GM12878 (cell line): ENCODE measurements at regions of chr10 and their contacts with region 1.

Region 1: DNA sequence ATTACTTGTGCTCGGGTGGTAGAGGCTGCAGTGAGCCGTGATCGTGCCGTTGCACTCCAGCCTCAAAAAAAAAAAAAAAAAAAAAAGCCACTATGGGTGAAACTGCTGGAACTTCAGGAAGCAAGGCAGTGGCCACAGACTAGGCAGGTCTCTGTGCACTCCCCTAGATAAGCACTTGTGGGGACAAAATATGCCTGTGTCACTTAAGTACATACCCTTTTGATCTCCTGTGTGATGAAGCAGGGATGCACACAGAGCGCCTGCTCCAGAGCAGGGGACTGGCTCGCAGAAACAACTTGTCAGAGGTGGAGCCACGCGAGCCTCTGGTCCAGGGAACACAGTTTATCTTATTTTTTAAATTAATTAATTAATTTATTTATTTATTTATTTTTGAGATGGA is 42.9 kb upstream of the PSAP start:
- DNase-seq: no peak
- ATAC-seq: no peak
- H3K4me3 ChIP-seq: no peak overlapping the region
- H3K27ac ChIP-seq: no peak overlapping the region
- H3K4me1 ChIP-seq: peaks cover 16% of the 10 kb centered on the region
- H3K27me3 ChIP-seq: no peaks in the 10 kb centered on the region
- CTCF ChIP-seq: no peak
- EP300 ChIP-seq: no peak
- POLR2A ChIP-seq: no peak
- RAD21 ChIP-seq: no peak

Region 2: GRCh38 chr10:71383972-71384687 is 509.8 kb before region 1 on chr10:
- CTCF ChIA-PET with region 1: no interaction called
- POLR2A ChIA-PET with region 1: no interaction called
- RAD21 ChIA-PET with region 1: no interaction called
- SMC1A ChIA-PET with region 1: no interaction called
- in situ Hi-C with region 1: no loop called
- intact Hi-C with region 1: loop called (anchors 10 kb)
- DNase-seq: no peak
- ATAC-seq: peak; percentile 98
- H3K4me3 ChIP-seq: no peak overlapping the region
- H3K27ac ChIP-seq: no peak overlapping the region
- H3K4me1 ChIP-seq: no peaks in the 10 kb centered on the region
- H3K27me3 ChIP-seq: peaks cover 0 to 3% of the 10 kb centered on the region in 2 experiments; a peak in 1 of 4 replicates
- CTCF ChIP-seq: peak; percentile 95 to 97 (median 95)
- EP300 ChIP-seq: no peak
- POLR2A ChIP-seq: no peak
- RAD21 ChIP-seq: peak; percentile 86

Region 3: GRCh38 chr10:71582019-71582418 is 311.9 kb before region 1 on chr10:
- CTCF ChIA-PET with region 1: no interaction called
- POLR2A ChIA-PET with region 1: no interaction called
- RAD21 ChIA-PET with region 1: no interaction called
- SMC1A ChIA-PET with region 1: no interaction called
- in situ Hi-C with region 1: no loop called
- intact Hi-C with region 1: no loop called
- DNase-seq: no peak
- ATAC-seq: 0 out of 3 replicates have a peak, but pooled peaks have one; percentile 23
- H3K4me3 ChIP-seq: no peak overlapping the region
- H3K27ac ChIP-seq: no peak overlapping the region
- H3K4me1 ChIP-seq: no peaks in the 10 kb centered on the region
- H3K27me3 ChIP-seq: no peaks in the 10 kb centered on the region; a peak in 1 of 4 replicates
- CTCF ChIP-seq: no peak
- EP300 ChIP-seq: no peak
- POLR2A ChIP-seq: no peak
- RAD21 ChIP-seq: no peak

Region 4: GRCh38 chr10:71766702-71767419 is 127.1 kb before region 1 on chr10:
- CTCF ChIA-PET with region 1: interaction called, 10 read pairs
- POLR2A ChIA-PET with region 1: no interaction called
- RAD21 ChIA-PET with region 1: interaction called, 19 read pairs
- SMC1A ChIA-PET with region 1: interaction called, 11 read pairs
- in situ Hi-C with region 1: no loop called
- intact Hi-C with region 1: no loop called
- DNase-seq: no peak
- ATAC-seq: peak; percentile 12
- H3K4me3 ChIP-seq: no peak overlapping the region
- H3K27ac ChIP-seq: no peak overlapping the region
- H3K4me1 ChIP-seq: peaks cover 32% of the 10 kb centered on the region
- H3K27me3 ChIP-seq: no peaks in the 10 kb centered on the region
- CTCF ChIP-seq: no peak
- EP300 ChIP-seq: no peak
- POLR2A ChIP-seq: no peak
- RAD21 ChIP-seq: no peak

Region 5: GRCh38 chr10:71835671-71836595 is 58.0 kb before region 1 on chr10:
- CTCF ChIA-PET with region 1: interaction called, 104 read pairs
- POLR2A ChIA-PET with region 1: interaction called, 4 read pairs
- RAD21 ChIA-PET with region 1: interaction called, 39 read pairs
- SMC1A ChIA-PET with region 1: interaction called, 27 read pairs
- in situ Hi-C with region 1: no loop called
- intact Hi-C with region 1: loop called (anchors 1 kb)
- DNase-seq: peak; percentile 97
- ATAC-seq: peak; percentile 97
- H3K4me3 ChIP-seq: peak overlapping the region; percentile 44
- H3K27ac ChIP-seq: peak overlapping the region; percentile 89
- H3K4me1 ChIP-seq: peaks cover 61% of the 10 kb centered on the region
- H3K27me3 ChIP-seq: no peaks in the 10 kb centered on the region
- CTCF ChIP-seq: no peak
- EP300 ChIP-seq: peak; percentile 87 to 93
- POLR2A ChIP-seq: no peak
- RAD21 ChIP-seq: no peak

Region 6: DNA sequence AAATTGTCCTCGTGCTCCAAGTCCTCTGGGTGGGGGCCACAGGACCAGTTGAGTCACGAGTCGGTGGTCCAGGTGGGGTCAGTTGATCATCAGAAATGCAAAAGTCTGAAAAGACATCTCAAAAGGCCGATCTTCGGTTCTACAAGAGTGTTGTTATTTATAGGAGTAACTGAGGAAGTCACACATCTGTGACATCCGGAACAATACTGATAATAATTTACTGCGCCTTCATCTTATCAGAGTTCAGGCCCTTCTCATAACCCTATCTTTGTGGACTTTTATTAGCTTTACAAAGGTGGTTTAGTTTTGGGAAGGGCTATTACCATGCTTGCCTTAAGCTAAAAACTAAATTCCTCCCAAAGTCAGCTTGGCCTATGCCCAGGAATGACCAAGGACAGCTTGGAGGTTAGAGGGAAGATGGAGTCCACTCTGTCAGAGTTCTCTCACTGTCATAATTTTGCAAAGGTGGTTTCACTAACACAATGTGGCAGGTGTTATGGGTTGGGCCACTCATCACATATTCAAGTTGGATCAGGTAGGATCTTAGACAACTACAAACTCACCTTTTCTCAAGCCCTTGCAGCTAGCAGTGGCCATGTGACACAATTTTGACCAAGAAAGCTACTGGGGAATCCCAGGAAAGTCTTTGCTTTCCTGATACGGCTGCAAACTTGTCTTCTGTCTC is 15.6 kb after region 1 on chr10:
- CTCF ChIA-PET with region 1: interaction called, 16 read pairs
- POLR2A ChIA-PET with region 1: no interaction called
- RAD21 ChIA-PET with region 1: no interaction called
- SMC1A ChIA-PET with region 1: interaction called, 5 read pairs
- in situ Hi-C with region 1: no loop called
- intact Hi-C with region 1: no loop called
- DNase-seq: no peak
- ATAC-seq: peak; percentile 66
- H3K4me3 ChIP-seq: no peak overlapping the region
- H3K27ac ChIP-seq: peak overlapping the region; percentile 52
- H3K4me1 ChIP-seq: peaks cover 13% of the 10 kb centered on the region
- H3K27me3 ChIP-seq: no peaks in the 10 kb centered on the region
- CTCF ChIP-seq: no peak
- EP300 ChIP-seq: no peak
- POLR2A ChIP-seq: no peak
- RAD21 ChIP-seq: no peak

Region 7: DNA sequence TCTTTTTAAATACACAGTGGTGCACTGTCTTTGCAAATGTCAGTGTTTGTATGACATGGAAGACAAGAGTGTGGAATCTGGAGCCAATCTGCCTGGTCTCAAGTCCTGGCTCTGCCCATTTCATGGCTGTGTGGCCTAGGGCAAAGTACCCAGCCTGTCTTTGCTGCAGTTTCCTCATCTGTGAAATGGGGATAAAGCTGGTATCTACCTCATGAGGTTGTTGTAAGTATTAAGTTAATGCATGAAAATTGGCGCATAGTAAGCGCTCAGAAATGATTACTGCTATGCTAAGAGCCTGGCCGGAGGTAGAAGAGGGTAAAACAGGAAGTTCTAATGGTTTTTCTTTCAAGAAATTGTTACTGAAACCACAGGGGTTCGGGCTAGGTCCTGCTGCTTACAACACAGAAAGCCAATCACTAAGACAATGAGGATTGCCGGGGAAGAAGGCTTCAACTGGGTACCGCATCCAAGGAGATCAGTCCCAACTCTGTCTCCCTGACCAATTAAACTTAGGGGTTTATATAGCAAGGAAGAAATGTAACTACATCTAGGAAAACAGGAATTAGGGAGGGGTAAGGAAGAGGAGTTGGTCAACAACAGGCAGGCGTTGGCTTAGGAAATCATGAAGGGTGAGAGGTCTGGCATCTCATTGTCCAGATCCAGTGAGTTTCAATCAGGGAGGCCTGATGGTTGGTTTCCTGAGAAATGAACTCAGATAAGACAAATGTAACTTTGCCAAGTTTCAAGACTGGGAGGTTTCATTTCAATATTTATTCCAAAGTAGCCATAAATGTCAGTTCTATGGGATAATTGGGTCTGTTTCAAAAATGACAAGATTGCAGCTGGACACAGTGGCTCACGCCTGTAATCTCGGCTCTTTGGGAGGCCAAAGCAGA is 127.2 kb after region 1 on chr10:
- CTCF ChIA-PET with region 1: no interaction called
- POLR2A ChIA-PET with region 1: no interaction called
- RAD21 ChIA-PET with region 1: no interaction called
- SMC1A ChIA-PET with region 1: no interaction called
- in situ Hi-C with region 1: no loop called
- intact Hi-C with region 1: no loop called
- DNase-seq: no peak
- ATAC-seq: no peak
- H3K4me3 ChIP-seq: no peak overlapping the region
- H3K27ac ChIP-seq: no peak overlapping the region
- H3K4me1 ChIP-seq: no peaks in the 10 kb centered on the region
- H3K27me3 ChIP-seq: no peaks in the 10 kb centered on the region
- CTCF ChIP-seq: no peak
- EP300 ChIP-seq: no peak
- POLR2A ChIP-seq: no peak
- RAD21 ChIP-seq: no peak

Region 8: DNA sequence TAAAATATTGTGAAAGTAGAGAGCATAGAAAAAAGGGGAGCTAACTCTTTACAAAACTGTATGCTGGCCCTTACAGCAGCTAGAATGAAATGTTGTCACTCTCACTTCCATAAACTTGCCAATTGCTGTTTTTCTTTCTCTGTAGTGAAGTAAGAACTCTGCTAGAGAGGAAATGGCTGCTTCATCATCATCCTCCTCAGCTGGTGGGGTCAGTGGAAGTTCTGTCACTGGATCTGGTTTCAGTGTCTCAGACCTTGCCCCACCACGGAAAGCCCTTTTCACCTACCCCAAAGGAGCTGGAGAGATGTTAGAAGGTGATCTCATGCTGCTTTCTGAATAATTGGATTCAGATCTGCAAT is 329.8 kb after region 1 on chr10:
- CTCF ChIA-PET with region 1: interaction called, 10 read pairs
- POLR2A ChIA-PET with region 1: no interaction called
- RAD21 ChIA-PET with region 1: interaction called, 5 read pairs
- SMC1A ChIA-PET with region 1: interaction called, 3 read pairs
- in situ Hi-C with region 1: no loop called
- intact Hi-C with region 1: loop called (anchors 5 kb)
- DNase-seq: no peak
- ATAC-seq: peak; percentile 71
- H3K4me3 ChIP-seq: no peak overlapping the region
- H3K27ac ChIP-seq: peak overlapping the region; percentile 47
- H3K4me1 ChIP-seq: peaks cover 29% of the 10 kb centered on the region
- H3K27me3 ChIP-seq: no peaks in the 10 kb centered on the region
- CTCF ChIP-seq: no peak
- EP300 ChIP-seq: no peak
- POLR2A ChIP-seq: no peak
- RAD21 ChIP-seq: no peak